Activated T-helper 1 cell treated with anti-CD3 and anti-CD28 coated beads, Interleukin-12 subunit alpha, Interleukin-12 subunit beta, Interleukin-2, Interleukin-4 antibody, amounts not matched to agents 30 ng/mL and 10 ng/mL and 1 ng/mL, durations not matched to agents 14 hours and 24 hours and 36 hours (primary cell): ENCODE measurements at regions of chr12 and their contacts with region 1.

Region 1: GRCh38 chr12:96516472-96517430 is 27.4 kb downstream of the CFAP54 start:
- DNase-seq: peak; percentile 71
- H3K4me3 Mint-ChIP-seq: peak overlapping the region; percentile 47
- H3K27ac Mint-ChIP-seq: peak overlapping the region; percentile 70
- H3K4me1 Mint-ChIP-seq: peaks cover 18% of the 10 kb centered on the region
- H3K27me3 Mint-ChIP-seq: no peaks in the 10 kb centered on the region

Region 2: DNA sequence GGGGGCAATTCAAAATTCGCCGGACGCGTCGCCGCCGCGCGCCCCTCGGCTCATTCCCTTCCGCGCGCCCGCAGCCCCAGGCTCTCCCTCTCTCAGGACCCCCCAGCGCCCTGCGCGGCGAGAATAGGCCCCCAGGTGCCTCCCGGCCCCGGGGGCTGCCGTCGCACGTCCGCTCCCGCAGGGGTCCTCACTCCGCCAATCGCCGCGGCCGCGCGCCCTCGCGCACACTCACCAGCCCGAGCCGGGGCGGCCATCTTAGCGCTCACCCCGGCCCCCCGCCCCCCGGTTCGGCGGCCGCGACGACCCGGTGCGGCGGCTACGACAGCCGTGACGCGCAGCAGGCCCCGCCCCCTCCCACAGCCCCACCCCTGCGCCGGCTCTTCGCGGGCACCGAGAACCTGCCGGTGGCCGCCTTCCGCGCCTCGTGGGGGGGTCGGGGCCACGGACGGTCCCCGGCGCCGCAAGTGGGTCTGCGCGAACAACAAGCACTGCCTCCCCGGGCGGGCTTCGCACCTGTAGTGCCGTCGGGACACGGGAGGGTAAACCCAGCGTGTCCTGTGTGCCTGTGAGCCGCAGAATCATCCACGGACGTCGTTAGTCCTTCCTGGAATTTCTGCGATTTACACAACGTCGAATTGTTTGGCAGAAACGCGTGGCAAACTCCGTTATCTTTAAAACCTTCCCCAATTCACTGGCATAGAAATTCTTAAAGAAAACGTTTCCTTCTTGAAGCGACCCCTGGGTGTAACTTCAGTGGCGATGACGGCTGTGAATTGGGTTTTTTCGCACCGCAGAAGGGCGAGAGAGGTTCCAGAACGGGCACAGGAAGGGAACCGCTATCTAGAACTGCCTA is 968.0 kb before region 1 on chr12:
- intact Hi-C with region 1: loop called (anchors 5 kb)
- DNase-seq: peak; percentile 66
- H3K4me3 Mint-ChIP-seq: peak overlapping the region; percentile 91
- H3K27ac Mint-ChIP-seq: peak overlapping the region; percentile 62
- H3K4me1 Mint-ChIP-seq: peaks cover 34% of the 10 kb centered on the region
- H3K27me3 Mint-ChIP-seq: peaks cover 3% of the 10 kb centered on the region

Region 3: GRCh38 chr12:96035278-96036236 is 481.2 kb before region 1 on chr12 and contains the start of gene LTA4H:
- intact Hi-C with region 1: loop called (anchors 1 kb)
- DNase-seq: peak; percentile 93
- H3K4me3 Mint-ChIP-seq: no peak within 1 kb of the TSS
- H3K27ac Mint-ChIP-seq: no peak within 1 kb of the TSS
- H3K4me1 Mint-ChIP-seq: peaks cover 10% of the 10 kb centered on the region
- H3K27me3 Mint-ChIP-seq: no peaks in the 10 kb centered on the region
- total RNA-seq, gene LTA4H: 57.3 and 59.6 TPM in 2 replicates

Region 4: GRCh38 chr12:96194971-96195844 is 321.5 kb before region 1 on chr12:
- intact Hi-C with region 1: loop called (anchors 1 kb)
- DNase-seq: peak; percentile 68
- H3K4me3 Mint-ChIP-seq: peak overlapping the region; percentile 96
- H3K27ac Mint-ChIP-seq: peak overlapping the region; percentile 98
- H3K4me1 Mint-ChIP-seq: peaks cover 49% of the 10 kb centered on the region
- H3K27me3 Mint-ChIP-seq: no peaks in the 10 kb centered on the region

Region 5: GRCh38 chr12:96285158-96285557 is 231.6 kb before region 1 on chr12:
- intact Hi-C with region 1: loop called (anchors 5 kb)
- DNase-seq: no peak
- H3K4me3 Mint-ChIP-seq: no peak overlapping the region
- H3K27ac Mint-ChIP-seq: peak overlapping the region; percentile 20
- H3K4me1 Mint-ChIP-seq: peaks cover 11% of the 10 kb centered on the region
- H3K27me3 Mint-ChIP-seq: no peaks in the 10 kb centered on the region

Region 6: DNA sequence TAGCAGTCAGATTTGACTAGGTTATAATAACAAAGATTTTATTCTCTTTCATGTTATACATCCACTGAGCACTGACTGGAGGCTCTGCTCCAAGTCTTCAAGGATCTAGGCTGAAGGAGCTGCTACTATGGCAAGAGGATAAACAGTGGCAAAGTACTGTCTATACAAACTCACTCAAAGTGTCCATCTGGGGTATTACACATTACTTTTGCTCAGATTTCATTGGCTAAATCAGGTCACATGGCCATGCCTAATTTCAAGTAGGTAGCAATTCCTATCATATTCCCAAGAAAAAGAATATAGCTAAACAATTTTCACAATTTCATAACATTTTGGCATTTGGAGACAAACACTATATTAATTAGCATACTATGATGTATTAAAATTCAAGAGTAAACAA is 157.4 kb before region 1 on chr12:
- intact Hi-C with region 1: no loop called
- DNase-seq: no peak
- H3K4me3 Mint-ChIP-seq: no peak overlapping the region
- H3K27ac Mint-ChIP-seq: no peak overlapping the region
- H3K4me1 Mint-ChIP-seq: peaks cover 39% of the 10 kb centered on the region
- H3K27me3 Mint-ChIP-seq: no peaks in the 10 kb centered on the region

Region 7: DNA sequence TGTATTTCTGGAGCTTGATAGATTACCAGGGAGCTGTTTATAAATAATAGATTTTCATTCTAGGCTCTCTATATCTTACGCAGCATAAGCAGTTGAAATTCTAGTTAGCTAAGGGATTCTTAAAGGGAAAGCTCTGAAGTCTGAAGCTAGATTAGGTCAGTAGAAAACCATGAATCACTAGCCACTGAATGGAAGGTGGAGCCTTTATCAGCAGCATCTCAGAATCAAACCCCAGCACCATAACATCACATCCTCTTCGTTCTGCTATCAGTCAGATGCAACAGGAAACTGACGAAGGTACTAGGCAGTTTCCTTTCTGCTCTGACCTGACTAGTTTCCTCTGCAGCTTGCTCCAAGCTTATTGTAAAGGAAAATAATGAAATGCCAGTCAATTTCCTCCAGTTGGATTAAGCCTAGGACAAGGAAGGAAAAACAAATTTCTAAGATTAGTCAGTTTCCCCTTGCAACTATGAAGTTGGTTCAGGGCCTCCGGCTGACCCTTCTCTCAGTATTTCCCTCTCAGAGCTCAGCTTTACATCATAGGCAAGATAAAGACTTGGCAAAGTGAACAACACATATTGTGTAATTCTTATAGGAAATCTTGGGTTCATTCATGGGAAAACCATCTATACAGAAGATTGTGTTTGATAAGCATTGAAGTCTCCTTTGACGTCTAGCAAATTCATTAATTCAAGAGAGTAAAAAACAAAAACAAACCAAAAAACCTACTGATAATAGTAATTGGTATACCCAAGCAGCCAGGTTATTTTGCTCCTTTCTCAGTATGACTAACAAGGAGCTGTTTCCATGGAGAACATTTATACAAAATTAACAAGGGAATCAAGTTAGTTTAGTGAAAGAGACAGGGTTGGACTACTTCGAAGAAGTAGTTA is 70.8 kb before region 1 on chr12:
- intact Hi-C with region 1: loop called (anchors 1 kb)
- DNase-seq: peak; percentile 70
- H3K4me3 Mint-ChIP-seq: peak overlapping the region; percentile 48
- H3K27ac Mint-ChIP-seq: peak overlapping the region; percentile 96
- H3K4me1 Mint-ChIP-seq: peaks cover 51% of the 10 kb centered on the region
- H3K27me3 Mint-ChIP-seq: no peaks in the 10 kb centered on the region

Region 8: DNA sequence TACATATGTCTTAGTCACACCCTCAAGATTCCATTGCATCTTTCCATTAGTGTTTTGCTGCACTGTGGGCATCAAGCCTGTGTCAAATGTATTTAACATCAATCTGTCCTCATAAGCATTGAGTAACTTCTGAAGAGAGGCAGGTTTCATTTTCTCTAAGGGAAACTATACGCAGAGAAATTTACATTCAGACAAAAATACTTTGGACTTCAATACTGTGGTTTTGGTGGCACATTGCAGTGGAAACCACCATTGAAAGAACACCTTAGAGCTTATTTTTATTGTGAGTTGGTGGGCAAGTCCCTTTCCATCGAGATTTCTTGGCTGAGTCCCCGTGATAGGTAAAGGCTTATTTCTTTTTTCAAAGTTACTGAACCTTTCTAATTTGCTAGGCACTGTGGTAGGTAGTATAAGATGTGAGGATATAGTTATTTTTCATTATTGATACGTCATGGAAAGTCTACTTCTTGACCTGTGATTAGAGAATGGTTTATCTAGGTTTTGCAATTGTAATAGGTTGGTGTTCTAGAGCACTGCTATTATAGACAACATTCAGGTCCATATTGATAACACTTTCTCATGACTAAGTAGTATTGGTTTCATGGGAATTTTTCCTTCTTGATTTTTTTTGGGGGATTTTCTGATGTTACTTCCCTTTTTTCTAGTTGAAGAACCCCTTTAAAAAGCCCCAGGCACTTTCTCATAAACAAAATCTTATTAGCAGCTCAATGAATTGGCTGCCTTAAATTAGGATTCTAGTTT is 54.5 kb after region 1 on chr12:
- intact Hi-C with region 1: loop called (anchors 1 kb)
- DNase-seq: no peak
- H3K4me3 Mint-ChIP-seq: peak overlapping the region; percentile 15
- H3K27ac Mint-ChIP-seq: peak overlapping the region; percentile 40
- H3K4me1 Mint-ChIP-seq: peaks cover 14% of the 10 kb centered on the region
- H3K27me3 Mint-ChIP-seq: no peaks in the 10 kb centered on the region